ENCODE measurements at regions of chrX and their contacts with region 1.

Region 1: GRCh38 chrX:100685284-100685996 is 41.4 kb downstream of the SRPX2 start:
- DNase-seq: no peak
- ATAC-seq: peak; percentile 92
- H3K4me3 ChIP-seq: no peak overlapping the region
- H3K27ac ChIP-seq: no peak overlapping the region
- H3K4me1 ChIP-seq: no peaks in the 10 kb centered on the region
- H3K27me3 ChIP-seq: no peaks in the 10 kb centered on the region
- CTCF ChIP-seq: peak; percentile 75

Region 2: DNA sequence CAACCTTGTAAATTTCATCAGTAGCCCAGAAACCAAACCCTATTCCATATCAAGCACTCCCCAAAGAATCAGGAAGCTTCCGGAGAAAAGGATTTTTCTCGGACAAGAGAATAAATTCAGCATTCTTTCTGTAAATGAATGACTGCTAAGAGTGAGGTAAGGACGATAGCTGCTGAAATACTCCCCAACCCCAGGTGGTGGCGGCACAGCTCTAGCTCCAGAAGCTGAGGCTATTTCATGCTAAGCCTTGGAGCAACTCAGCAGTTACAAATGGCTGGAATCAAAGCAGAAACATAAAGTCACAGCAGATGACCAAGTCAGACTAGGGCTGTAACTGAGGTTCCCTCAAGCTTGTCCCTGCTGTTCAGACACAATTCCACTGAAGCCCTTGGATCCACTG is 261.4 kb before region 1 on chrX:
- intact Hi-C with region 1: no loop called
- DNase-seq: no peak
- ATAC-seq: no peak
- H3K4me3 ChIP-seq: no peak overlapping the region
- H3K27ac ChIP-seq: no peak overlapping the region
- H3K4me1 ChIP-seq: no peaks in the 10 kb centered on the region
- H3K27me3 ChIP-seq: no peaks in the 10 kb centered on the region
- CTCF ChIP-seq: no peak

Region 3: DNA sequence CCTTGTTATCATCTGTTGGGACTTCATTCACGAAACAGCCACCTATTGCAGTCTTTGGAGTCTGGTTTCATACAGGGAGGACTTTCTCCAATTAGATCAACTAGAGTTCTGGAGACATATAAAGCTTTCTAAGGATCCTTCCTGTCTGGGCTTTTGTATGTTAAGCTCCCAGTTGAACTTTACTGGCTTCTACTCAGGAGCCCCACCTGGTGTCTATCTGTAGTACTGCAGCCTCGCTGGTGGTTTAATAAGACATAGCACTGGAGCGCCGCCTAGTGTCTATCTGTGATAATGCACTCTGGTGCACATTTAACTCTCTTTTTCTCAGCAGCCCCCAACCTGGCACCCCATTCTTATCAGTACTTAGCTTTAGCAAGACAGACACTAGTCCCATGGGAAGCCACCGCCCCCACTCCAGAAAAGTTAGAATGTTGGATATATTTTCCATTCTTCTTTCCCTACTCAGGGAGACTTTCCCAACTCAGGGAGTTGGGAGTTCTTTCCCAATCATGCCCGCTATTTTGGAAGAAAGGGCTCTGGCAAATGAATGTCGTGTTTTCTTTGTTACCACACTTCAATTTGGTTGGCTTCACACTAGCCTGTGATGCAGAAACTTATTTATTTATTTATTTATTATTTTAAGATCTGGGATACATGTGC is 83.4 kb after region 1 on chrX:
- intact Hi-C with region 1: loop called (anchors 10 kb)
- DNase-seq: peak; percentile 72
- ATAC-seq: peak; percentile 100
- H3K4me3 ChIP-seq: no peak overlapping the region
- H3K27ac ChIP-seq: no peak overlapping the region
- H3K4me1 ChIP-seq: no peaks in the 10 kb centered on the region
- H3K27me3 ChIP-seq: no peaks in the 10 kb centered on the region
- CTCF ChIP-seq: peak; percentile 98

Region 4: GRCh38 chrX:100819534-100819836 is 134.0 kb after region 1 on chrX:
- intact Hi-C with region 1: no loop called
- DNase-seq: no peak
- ATAC-seq: no peak
- H3K4me3 ChIP-seq: peak overlapping the region; percentile 67
- H3K27ac ChIP-seq: peak overlapping the region; percentile 81
- H3K4me1 ChIP-seq: peaks cover 6% of the 10 kb centered on the region
- H3K27me3 ChIP-seq: no peaks in the 10 kb centered on the region
- CTCF ChIP-seq: no peak